ENCODE measurements at regions of chr5 and their contacts with region 1.

Region 1: GRCh38 chr5:71601222-71602041 is 14.3 kb downstream of the MCCC2 start:
- DNase-seq: peak; percentile 90
- H3K4me3 Mint-ChIP-seq: peak overlapping the region; percentile 1
- H3K27ac Mint-ChIP-seq: peak overlapping the region; percentile 96
- H3K4me1 Mint-ChIP-seq: peaks cover 33% of the 10 kb centered on the region
- H3K27me3 Mint-ChIP-seq: no peaks in the 10 kb centered on the region

Region 2: GRCh38 chr5:71455427-71456361 is 145.7 kb before region 1 on chr5 and contains the start of gene BDP1:
- CTCF ChIA-PET with region 1: no interaction called
- POLR2A ChIA-PET with region 1: no interaction called
- intact Hi-C with region 1: loop called (anchors 1 kb)
- DNase-seq: peak; percentile 99
- H3K4me3 Mint-ChIP-seq: peak within 1 kb of the TSS; percentile 96
- H3K27ac Mint-ChIP-seq: peak within 1 kb of the TSS; percentile 92
- H3K4me1 Mint-ChIP-seq: peaks cover 24% of the 10 kb centered on the region
- H3K27me3 Mint-ChIP-seq: peaks cover 7% of the 10 kb centered on the region
- total RNA-seq, gene BDP1: 23.7 to 26.6 TPM

Region 3: DNA sequence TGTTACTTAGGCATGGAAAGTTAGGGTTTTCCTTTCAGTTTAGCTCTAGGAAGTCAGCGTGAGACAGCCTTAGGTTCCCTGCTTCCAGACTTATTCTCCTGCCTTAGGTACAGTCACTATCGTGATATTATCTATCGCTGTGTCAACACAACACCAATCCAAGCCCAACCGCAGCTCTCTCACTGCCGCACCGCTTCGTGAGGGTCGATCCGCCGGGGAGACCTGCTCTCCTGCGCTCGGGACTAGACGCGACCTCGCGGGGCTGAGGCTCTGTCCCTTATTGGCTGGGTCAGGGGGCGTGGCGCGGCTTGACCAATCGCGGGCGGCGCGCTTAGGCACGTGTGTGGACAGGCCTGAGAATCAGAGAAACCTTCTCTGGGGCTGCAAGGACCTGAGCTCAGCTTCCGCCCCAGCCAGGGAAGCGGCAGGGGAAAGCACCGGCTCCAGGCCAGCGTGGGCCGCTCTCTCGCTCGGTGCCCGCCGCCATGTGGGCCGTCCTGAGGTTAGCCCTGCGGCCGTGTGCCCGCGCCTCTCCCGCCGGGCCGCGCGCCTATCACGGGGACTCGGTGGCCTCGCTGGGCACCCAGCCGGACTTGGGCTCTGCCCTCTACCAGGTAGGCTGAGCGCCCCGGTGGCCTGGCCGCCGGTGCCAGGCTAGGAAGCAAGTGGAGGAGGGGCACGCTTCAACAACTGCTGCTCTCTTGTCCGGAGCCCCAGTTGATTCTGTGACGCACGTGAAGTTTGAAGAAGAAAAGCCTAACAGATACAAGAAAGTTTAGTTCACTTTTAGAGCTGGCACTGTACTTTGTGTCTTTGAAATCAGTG is 14.3 kb before region 1 on chr5 and contains the start of gene MCCC2:
- CTCF ChIA-PET with region 1: interaction called, 70 read pairs
- POLR2A ChIA-PET with region 1: interaction called, 16 read pairs
- intact Hi-C with region 1: loop called (anchors 1 kb)
- DNase-seq: peak; percentile 98
- H3K4me3 Mint-ChIP-seq: peak within 1 kb of the TSS; percentile 84
- H3K27ac Mint-ChIP-seq: peak within 1 kb of the TSS; percentile 90
- H3K4me1 Mint-ChIP-seq: peaks cover 34% of the 10 kb centered on the region
- H3K27me3 Mint-ChIP-seq: no peaks in the 10 kb centered on the region
- total RNA-seq, gene MCCC2: 52.8 to 54.4 TPM

Region 4: GRCh38 chr5:71651579-71651978 is 50.1 kb after region 1 on chr5:
- CTCF ChIA-PET with region 1: no interaction called
- POLR2A ChIA-PET with region 1: no interaction called
- intact Hi-C with region 1: loop called (anchors 1 kb)
- DNase-seq: peak; percentile 68
- H3K4me3 Mint-ChIP-seq: no peak overlapping the region
- H3K27ac Mint-ChIP-seq: no peak overlapping the region
- H3K4me1 Mint-ChIP-seq: peaks cover 13% of the 10 kb centered on the region
- H3K27me3 Mint-ChIP-seq: no peaks in the 10 kb centered on the region

Region 5: GRCh38 chr5:71663570-71663969 is 62.1 kb after region 1 on chr5:
- CTCF ChIA-PET with region 1: no interaction called
- POLR2A ChIA-PET with region 1: no interaction called
- intact Hi-C with region 1: no loop called
- DNase-seq: no peak
- H3K4me3 Mint-ChIP-seq: no peak overlapping the region
- H3K27ac Mint-ChIP-seq: no peak overlapping the region
- H3K4me1 Mint-ChIP-seq: no peaks in the 10 kb centered on the region
- H3K27me3 Mint-ChIP-seq: no peaks in the 10 kb centered on the region

Region 6: GRCh38 chr5:71740015-71740753 is 138.8 kb after region 1 on chr5:
- CTCF ChIA-PET with region 1: no interaction called
- POLR2A ChIA-PET with region 1: no interaction called
- intact Hi-C with region 1: no loop called
- DNase-seq: no peak
- H3K4me3 Mint-ChIP-seq: no peak overlapping the region
- H3K27ac Mint-ChIP-seq: no peak overlapping the region
- H3K4me1 Mint-ChIP-seq: no peaks in the 10 kb centered on the region
- H3K27me3 Mint-ChIP-seq: peaks cover 9% of the 10 kb centered on the region

Region 7: DNA sequence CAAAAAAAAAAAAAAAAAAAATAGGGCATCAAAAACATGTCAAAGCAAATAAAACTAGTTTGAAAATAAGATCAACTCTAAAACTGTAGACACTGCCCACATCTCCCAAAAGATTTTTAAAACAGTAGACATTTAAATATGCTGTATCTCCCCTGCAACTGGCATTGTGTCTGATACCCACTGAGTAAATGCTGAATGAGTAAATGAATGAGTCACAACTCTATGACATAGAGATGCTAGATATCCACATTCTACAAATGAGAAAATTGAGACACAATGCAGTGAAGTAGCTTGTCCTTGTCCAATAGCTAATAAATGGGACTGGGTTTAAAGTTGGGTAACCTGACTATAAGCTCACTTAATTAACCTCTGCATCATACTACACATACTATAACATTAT is 491.8 kb after region 1 on chr5:
- CTCF ChIA-PET with region 1: no interaction called
- POLR2A ChIA-PET with region 1: no interaction called
- intact Hi-C with region 1: loop called (anchors 2 kb)
- DNase-seq: no peak
- H3K4me3 Mint-ChIP-seq: no peak overlapping the region
- H3K27ac Mint-ChIP-seq: no peak overlapping the region
- H3K4me1 Mint-ChIP-seq: peaks cover 11% of the 10 kb centered on the region
- H3K27me3 Mint-ChIP-seq: peaks cover 29% of the 10 kb centered on the region